Esophagus muscularis mucosa (tissue), 4 donors: ENCODE measurements at regions of chr1 and their contacts with region 1.

Region 1: DNA sequence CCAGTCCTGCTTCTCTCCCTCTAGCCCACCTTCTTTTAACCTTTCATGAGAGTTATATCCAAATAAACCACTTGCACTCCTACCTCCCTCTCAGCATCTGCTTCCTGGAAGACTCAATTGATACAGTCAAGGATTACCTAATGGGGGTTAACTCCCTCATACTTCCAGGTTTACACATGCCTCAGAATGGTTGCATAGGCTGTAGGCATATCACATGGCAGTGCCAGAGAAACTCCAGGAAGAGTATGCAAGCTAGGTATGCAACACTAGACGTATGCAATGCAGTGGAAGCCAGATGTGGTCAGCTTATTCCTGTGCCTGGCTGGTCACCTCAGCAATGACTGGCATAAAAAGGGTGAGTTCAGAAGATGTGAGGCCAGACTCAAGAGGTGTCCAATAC is 32.7 kb upstream of the VANGL1 start:
- DNase-seq: no peak
- H3K4me3 ChIP-seq: no peak overlapping the region
- H3K27ac ChIP-seq: no peak overlapping the region
- H3K4me1 ChIP-seq: peaks cover 0 to 5% (median 1%) of the 10 kb centered on the region in 4 donors
- H3K27me3 ChIP-seq: no peaks in the 10 kb centered on the region
- CTCF ChIP-seq: no peak
- EP300 ChIP-seq: no peak
- POLR2A ChIP-seq: no peak

Region 2: DNA sequence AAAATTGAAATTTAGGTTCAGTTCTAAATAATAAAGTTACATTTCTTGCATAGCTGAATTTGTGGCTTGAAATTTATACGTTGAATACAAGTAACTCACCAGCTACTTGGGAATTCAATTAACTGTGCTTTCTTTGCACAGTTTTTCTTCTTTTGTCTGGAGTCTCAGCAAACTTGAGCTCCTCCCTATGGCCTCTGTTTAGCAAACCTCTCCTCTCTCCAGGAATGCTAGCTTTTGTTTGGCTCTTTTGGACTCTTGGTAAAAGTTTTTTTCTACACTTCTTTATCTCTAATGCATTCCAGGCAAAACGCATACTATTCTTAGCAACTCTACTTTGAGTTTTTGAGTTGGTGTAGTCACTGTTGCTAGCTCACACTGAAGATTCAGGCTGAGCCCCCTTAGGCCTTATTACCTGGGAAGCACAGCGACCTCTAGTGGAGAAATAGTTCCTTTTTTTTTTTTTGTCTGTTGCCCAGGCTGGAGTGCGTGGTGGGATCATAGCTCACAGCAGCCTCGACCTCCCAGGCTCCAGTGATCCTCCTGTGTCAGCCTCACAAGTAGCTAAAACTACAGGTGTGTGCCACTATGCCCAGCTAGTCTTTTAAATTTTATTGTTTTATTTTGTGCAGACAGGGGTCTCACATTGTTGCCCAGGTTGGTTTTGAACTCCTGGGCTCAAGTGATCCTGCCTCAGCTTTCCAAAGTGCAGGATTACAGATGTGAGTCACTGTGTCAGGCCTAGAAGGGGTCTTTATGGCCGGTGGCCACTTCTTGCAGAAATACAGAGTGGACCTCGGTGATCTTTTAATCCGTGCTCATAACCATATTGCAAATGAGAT is 97.8 kb after region 1 on chr1:
- intact Hi-C with region 1: loop called (anchors 5 kb)
- DNase-seq: no peak
- H3K4me3 ChIP-seq: no peak overlapping the region
- H3K27ac ChIP-seq: no peak overlapping the region
- H3K4me1 ChIP-seq: peaks cover 0 to 27% (median 2%) of the 10 kb centered on the region in 4 donors
- H3K27me3 ChIP-seq: no peaks in the 10 kb centered on the region
- CTCF ChIP-seq: peak; percentile 43 to 66 (median 58)
- EP300 ChIP-seq: no peak
- POLR2A ChIP-seq: no peak

Region 3: GRCh38 chr1:115771847-115772457 is 162.9 kb after region 1 on chr1:
- intact Hi-C with region 1: loop called (anchors 5 kb)
- DNase-seq: peak; percentile 92
- H3K4me3 ChIP-seq: peak overlapping the region; percentile 15 to 40 (median 36)
- H3K27ac ChIP-seq: peak overlapping the region; percentile 49 to 69 (median 59)
- H3K4me1 ChIP-seq: peaks cover 9 to 33% (median 20%) of the 10 kb centered on the region in 4 donors
- H3K27me3 ChIP-seq: no peaks in the 10 kb centered on the region
- CTCF ChIP-seq: peak; percentile 77 to 82 (median 80)
- EP300 ChIP-seq: no peak
- POLR2A ChIP-seq: no peak